ENCODE measurements at regions of chr4 and their contacts with region 1.

Region 1: DNA sequence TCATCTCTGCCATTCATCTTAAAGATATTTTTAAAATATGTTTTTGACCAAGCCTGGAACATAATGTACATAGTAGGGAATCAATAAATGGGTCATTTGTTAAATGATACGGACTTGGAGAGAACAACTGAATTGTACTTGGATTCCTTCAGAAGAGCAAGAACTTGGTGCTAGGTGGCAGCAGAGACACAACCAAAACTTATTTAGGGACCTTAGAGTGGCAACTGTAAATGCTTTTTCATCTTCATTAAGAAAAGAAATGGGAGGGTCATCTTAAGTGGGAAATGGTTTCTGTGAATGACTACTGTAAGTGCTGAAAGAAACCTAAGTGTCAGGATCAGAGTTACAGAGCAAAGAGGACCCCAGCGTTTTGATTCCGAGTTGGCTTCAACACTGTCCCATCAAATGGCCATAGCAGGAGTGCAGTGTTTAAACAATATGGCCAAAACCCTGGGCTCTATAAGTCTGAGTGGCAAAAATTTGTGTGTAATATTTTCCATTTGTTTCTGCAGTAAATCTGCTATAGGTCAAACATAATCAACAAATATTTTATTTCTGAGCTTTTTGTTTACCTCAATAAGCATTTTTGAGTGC is 213.6 kb downstream of the PALLD start:
- DNase-seq: peak; percentile 17 to 43
- ATAC-seq: peak; percentile 66 to 74
- H3K4me3 ChIP-seq: no peak overlapping the region
- H3K27ac ChIP-seq: peak overlapping the region; percentile 29 to 72 (median 58)
- H3K4me1 ChIP-seq: peaks cover 24 to 26% of the 10 kb centered on the region in 2 donors
- H3K27me3 ChIP-seq: no peaks in the 10 kb centered on the region
- CTCF ChIP-seq: peak; percentile 48 to 75 (median 66)
- POLR2A ChIP-seq: no peak

Region 2: DNA sequence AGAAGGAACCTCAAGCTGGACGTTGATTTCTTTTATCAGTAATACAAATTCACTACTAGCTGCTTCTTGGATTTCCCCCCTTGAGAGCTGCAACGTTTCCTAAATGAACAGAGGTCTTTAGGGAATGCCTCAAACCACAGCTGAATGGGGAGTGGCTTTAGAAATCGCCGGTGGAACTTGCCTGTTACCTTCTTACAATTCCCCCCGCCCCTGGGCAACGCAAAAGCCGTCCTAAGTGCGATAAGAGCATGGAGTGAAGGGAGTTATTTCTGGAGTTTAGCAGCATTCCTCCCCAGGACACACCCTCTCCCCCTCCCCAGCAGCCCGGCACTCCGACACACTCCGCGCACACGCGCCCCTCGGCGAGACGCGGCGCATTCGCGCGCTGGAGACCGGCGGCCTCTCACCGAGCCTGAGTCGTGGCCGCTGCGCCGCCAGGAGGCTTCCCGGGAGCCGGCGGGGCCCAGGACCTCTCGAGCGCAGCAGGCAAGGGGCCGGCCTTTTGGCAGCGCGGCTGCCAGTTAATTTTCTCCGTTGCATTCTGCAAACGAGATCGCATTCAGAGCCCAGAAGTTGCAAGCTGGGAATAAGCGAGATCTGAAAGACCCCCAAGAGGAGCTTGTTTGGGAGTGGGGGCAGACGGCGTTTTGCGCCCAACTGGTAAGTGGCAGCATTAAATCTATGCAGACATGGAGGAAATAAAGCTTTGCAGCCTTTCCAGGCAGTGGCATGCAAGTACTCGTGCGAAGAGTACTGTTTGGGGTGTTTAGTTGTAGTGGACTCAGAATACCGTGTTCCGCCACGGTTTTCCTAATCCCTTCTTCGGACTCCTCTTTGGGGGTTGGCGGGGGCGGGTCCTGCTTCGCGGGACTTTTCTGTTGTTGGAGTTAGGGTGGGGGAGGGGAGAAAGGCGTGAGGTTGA is 78.9 kb before region 1 on chr4:
- in situ Hi-C with region 1: no loop called
- intact Hi-C with region 1: loop called (anchors 5 kb)
- DNase-seq: peak; percentile 34 to 69
- ATAC-seq: peak; percentile 75 to 77
- H3K4me3 ChIP-seq: peak overlapping the region; percentile 78 to 86 (median 79)
- H3K27ac ChIP-seq: peak overlapping the region; percentile 77 to 89 (median 82)
- H3K4me1 ChIP-seq: peaks cover 31 to 49% of the 10 kb centered on the region in 2 donors
- H3K27me3 ChIP-seq: no peaks in the 10 kb centered on the region
- CTCF ChIP-seq: peak; percentile 40 to 67 (median 52)
- POLR2A ChIP-seq: peak in 1 of 2 donors; percentile 9

Region 3: DNA sequence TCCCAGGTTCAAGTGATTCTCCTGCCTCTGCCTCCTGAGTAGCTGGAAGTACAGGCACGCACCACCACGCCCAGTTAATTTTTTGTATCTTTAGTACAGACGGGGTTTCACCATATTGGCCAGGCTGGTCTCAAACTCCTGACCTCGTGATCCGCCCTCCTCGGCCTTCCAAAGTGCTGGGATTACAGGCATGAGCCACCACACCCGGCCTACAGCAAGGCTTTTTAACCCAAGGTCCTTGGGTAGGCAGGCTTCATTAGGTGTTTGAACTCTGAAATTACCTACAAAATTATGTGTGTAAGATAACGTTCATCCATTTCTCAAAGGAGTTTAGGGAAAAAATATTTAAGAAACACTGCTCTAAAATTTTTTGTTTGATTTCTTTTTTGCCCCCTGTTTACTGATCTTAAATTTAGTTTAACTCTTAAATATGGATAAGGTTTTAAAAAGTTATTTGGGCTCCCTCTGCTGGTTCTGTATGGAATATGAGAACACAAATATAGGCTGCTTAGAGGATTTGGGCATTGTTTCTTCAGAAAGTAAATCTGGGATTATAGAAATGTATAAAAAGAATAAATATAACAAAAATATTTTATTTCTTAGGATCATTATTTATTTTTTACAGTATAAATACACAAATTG is 206.8 kb after region 1 on chr4:
- in situ Hi-C with region 1: loop called (anchors 5 to 10 kb)
- intact Hi-C with region 1: loop called (anchors 1 kb)
- DNase-seq: no peak
- ATAC-seq: peak in 1 of 2 donors; percentile 31
- H3K4me3 ChIP-seq: no peak overlapping the region
- H3K27ac ChIP-seq: peak overlapping the region in 3 of 4 donors; percentile 28 to 49 (median 47)
- H3K4me1 ChIP-seq: peaks cover 0 to 6% of the 10 kb centered on the region in 2 donors
- H3K27me3 ChIP-seq: no peaks in the 10 kb centered on the region
- CTCF ChIP-seq: peak; percentile 48 to 82 (median 64)
- POLR2A ChIP-seq: no peak